ENCODE measurements at regions of chr3 and their contacts with region 1.

Region 1: GRCh38 chr3:47553407-47553806 is 25.3 kb downstream of the CSPG5 start:
- DNase-seq: no peak
- ATAC-seq: no peak
- H3K4me3 Mint-ChIP-seq: no peak overlapping the region
- H3K27ac Mint-ChIP-seq: no peak overlapping the region
- H3K4me1 Mint-ChIP-seq: no peaks in the 10 kb centered on the region
- H3K27me3 Mint-ChIP-seq: peaks cover 5% of the 10 kb centered on the region

Region 2: DNA sequence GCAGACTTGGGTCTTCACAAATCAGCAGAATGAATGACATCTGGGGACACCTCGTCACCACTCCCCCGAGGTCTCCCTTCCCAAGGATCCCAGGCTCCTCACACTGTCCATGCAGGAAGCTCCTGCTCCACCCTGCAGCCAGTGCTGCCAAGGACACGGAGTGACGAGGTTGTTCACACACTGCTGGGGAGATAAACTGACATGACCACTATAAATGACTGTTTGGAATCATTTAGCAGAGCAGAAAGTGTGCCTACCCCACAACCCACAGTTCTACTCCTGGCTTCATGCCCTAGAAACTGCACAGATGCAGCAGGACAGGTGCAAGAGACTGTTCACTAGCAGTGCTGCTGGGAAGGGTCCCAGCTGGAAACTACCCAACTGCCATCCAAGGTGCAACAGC is 816.1 kb before region 1 on chr3:
- CTCF ChIA-PET with region 1: no interaction called
- POLR2A ChIA-PET with region 1: no interaction called
- intact Hi-C with region 1: no loop called
- DNase-seq: no peak
- ATAC-seq: no peak
- H3K4me3 Mint-ChIP-seq: no peak overlapping the region
- H3K27ac Mint-ChIP-seq: no peak overlapping the region
- H3K4me1 Mint-ChIP-seq: no peaks in the 10 kb centered on the region
- H3K27me3 Mint-ChIP-seq: peaks cover 1% of the 10 kb centered on the region

Region 3: GRCh38 chr3:47590216-47590615 is 36.8 kb after region 1 on chr3:
- CTCF ChIA-PET with region 1: no interaction called
- POLR2A ChIA-PET with region 1: interaction called, 12 read pairs
- intact Hi-C with region 1: no loop called
- DNase-seq: no peak
- ATAC-seq: no peak
- H3K4me3 Mint-ChIP-seq: no peak overlapping the region
- H3K27ac Mint-ChIP-seq: no peak overlapping the region
- H3K4me1 Mint-ChIP-seq: no peaks in the 10 kb centered on the region
- H3K27me3 Mint-ChIP-seq: no peaks in the 10 kb centered on the region

Region 4: GRCh38 chr3:47731061-47731460 is 177.7 kb after region 1 on chr3:
- CTCF ChIA-PET with region 1: no interaction called
- POLR2A ChIA-PET with region 1: no interaction called
- intact Hi-C with region 1: no loop called
- DNase-seq: no peak
- ATAC-seq: no peak
- H3K4me3 Mint-ChIP-seq: no peak overlapping the region
- H3K27ac Mint-ChIP-seq: no peak overlapping the region
- H3K4me1 Mint-ChIP-seq: peaks cover 8% of the 10 kb centered on the region
- H3K27me3 Mint-ChIP-seq: no peaks in the 10 kb centered on the region

Region 5: GRCh38 chr3:47813551-47814177 is 260.3 kb after region 1 on chr3:
- CTCF ChIA-PET with region 1: no interaction called
- POLR2A ChIA-PET with region 1: no interaction called
- intact Hi-C with region 1: no loop called
- DNase-seq: no peak
- ATAC-seq: no peak
- H3K4me3 Mint-ChIP-seq: no peak overlapping the region
- H3K27ac Mint-ChIP-seq: no peak overlapping the region
- H3K4me1 Mint-ChIP-seq: no peaks in the 10 kb centered on the region
- H3K27me3 Mint-ChIP-seq: no peaks in the 10 kb centered on the region

Measured in activated CD4-positive, alpha-beta T cell treated with anti-CD3 and anti-CD28 coated beads for 36 hours (primary cell).